CD8-positive, alpha-beta T cell (primary cell): ENCODE measurements at regions of chr1 and their contacts with region 1.

Region 1: GRCh38 chr1:179081687-179082332 is at the start of gene TOR3A:
- DNase-seq: peak; percentile 43 to 87 (median 75)
- ATAC-seq: peak; percentile 47
- H3K4me3 ChIP-seq: peak within 1 kb of the TSS; percentile 62 to 78
- H3K4me3 Mint-ChIP-seq: peak within 1 kb of the TSS; percentile 98
- H3K27ac ChIP-seq: peak within 1 kb of the TSS; percentile 58 to 74
- H3K27ac Mint-ChIP-seq: peak within 1 kb of the TSS; percentile 97
- H3K4me1 ChIP-seq: peaks cover 20% of the 10 kb centered on the region
- H3K4me1 Mint-ChIP-seq: peaks cover 31% of the 10 kb centered on the region
- H3K27me3 ChIP-seq: no peaks in the 10 kb centered on the region
- H3K27me3 Mint-ChIP-seq: no peaks in the 10 kb centered on the region
- CTCF ChIP-seq: no peak
- total RNA-seq, gene TOR3A: 15.6 to 16.0 TPM

Region 2: DNA sequence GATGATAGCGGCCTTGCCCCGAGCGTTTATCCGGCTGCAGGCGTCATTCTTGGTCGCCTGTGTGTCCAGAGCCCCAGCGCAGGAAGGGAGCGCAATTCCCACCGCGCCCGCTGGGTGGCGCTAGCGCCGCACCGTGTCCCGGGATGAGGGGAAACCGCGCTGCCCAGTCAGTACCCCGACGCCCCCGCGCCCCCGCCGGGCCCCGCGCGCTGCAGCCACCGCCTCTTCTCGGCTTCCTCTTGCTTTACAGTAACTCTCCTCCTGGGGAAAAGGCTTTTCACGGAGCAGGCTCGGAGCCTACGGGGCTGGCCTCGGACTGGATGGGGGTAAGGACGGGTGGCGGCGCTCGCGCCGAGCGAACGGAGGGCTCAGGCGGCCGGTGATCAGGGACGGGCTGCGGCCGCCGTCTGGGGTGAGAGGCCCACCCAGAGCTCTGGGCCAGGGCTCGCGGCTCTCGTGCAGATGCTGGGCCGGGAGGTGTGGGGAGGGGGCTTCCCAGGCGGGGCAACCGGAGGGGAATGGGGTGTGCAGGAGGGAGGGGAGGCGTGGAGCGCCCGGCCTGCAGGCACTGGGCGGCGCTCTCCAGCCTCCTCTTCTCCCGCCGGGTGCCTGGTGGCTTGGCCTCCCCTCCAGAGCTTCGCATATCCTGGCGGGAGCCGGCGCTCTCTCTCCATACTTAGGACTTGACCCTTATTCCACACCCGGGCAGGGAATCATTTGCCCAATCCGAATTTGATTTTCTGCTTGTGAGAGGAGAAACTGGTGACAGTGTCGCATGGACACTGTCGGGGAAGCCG is 539.1 kb before region 1 on chr1:
- CTCF ChIA-PET with region 1: no interaction called
- POLR2A ChIA-PET with region 1: no interaction called
- intact Hi-C with region 1: loop called in 1 of 2 experiments (anchors 2 kb)
- DNase-seq: peak; percentile 68 to 96 (median 85)
- ATAC-seq: peak; percentile 92
- H3K4me3 ChIP-seq: peak overlapping the region; percentile 75 to 92
- H3K4me3 Mint-ChIP-seq: peak overlapping the region; percentile 90
- H3K27ac ChIP-seq: peak overlapping the region in 1 of 2 experiments; percentile 22
- H3K27ac Mint-ChIP-seq: peak overlapping the region; percentile 62
- H3K4me1 ChIP-seq: peaks cover 11% of the 10 kb centered on the region
- H3K4me1 Mint-ChIP-seq: peaks cover 9% of the 10 kb centered on the region
- H3K27me3 ChIP-seq: no peaks in the 10 kb centered on the region
- H3K27me3 Mint-ChIP-seq: no peaks in the 10 kb centered on the region
- CTCF ChIP-seq: peak; percentile 98

Region 3: DNA sequence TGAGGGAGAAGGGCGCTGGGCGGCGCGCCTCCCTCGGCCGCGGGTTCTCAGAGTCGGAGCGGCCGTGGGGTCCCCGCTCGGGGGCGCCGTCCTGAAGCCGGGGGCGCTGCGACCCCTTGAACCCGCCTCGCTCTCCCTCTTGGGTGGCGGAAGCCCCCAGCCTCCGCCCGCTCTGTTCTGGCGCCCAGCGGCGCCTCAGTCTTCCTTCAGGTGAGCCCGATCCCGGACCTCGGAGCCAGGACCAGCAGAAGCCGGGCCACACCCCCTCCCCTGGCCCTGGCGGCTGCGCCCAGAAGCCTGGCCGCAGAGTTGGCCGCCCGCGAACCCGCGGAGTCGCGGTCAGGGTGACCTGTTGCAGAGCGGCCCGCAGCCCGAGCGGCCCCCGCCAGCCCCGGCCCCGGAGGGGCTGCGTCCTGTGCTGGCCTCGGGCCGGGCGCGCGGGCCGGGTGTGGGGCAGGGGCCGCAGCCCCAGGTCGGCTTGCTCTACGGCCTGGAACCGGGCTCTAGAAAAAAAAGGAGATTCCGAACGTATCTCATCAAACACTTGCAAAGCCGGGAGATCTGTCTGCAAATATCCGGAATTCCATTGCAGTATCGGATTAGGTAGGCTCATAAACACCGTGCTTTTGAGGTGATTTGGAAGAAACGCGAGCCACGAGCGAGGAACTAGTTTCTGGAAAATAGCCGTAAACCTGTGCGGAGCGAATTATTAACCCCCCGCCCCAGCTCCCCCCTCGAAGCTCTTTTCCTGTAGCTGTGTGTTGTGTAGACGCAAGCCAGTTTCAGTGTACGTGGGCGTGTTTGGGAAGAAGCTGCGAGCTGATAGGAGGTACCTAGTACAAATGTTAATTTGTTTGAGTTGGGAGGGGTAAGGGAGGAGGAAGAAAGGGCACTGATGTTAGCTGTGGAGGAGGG is 355.9 kb before region 1 on chr1:
- CTCF ChIA-PET with region 1: no interaction called
- POLR2A ChIA-PET with region 1: no interaction called
- intact Hi-C with region 1: loop called in 1 of 2 experiments (anchors 5 kb)
- DNase-seq: peak in 8 of 9 experiments; percentile 31 to 85 (median 62)
- ATAC-seq: peak; percentile 81
- H3K4me3 ChIP-seq: peak overlapping the region; percentile 67 to 90
- H3K4me3 Mint-ChIP-seq: peak overlapping the region; percentile 85
- H3K27ac ChIP-seq: peak overlapping the region; percentile 58 to 69
- H3K27ac Mint-ChIP-seq: peak overlapping the region; percentile 75
- H3K4me1 ChIP-seq: peaks cover 10% of the 10 kb centered on the region
- H3K4me1 Mint-ChIP-seq: peaks cover 23% of the 10 kb centered on the region
- H3K27me3 ChIP-seq: no peaks in the 10 kb centered on the region
- H3K27me3 Mint-ChIP-seq: peaks cover 3% of the 10 kb centered on the region
- CTCF ChIP-seq: no peak

Region 4: DNA sequence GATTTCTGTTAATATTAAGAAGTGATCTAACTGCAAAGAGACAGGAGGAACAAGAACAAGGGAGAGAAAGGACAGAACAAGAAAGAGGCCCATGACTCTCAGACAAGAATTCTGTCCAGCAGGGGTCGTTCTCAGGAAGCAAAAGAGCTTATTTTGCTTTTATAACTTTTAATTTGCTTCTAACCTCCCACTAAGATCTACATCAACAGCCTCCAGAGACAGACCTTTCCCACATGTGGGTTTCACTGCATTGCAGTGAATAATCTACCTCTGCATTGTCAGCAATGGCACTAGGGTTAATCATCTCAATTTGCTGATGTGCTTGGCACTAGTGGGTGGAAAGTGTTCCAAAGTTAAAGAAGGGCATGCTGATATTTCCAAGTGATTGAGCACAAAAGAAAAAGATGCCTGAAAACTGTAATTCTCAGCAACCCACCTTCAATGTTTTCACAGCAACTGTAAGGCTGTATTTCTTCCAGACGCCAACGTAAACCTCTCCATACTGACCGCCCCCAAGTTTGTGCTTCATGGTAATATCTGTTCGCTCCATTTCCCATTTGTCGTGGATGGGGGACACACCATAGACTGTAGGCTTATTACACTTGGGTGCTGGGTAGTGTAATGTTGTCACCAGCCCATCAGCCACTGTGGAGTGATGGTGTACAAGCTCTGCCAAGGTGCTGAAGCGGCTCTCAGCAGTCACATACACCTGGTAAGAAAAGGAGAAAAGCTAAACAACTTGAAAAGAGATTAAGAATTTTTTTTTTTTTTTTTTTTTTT is 39.5 kb after region 1 on chr1:
- CTCF ChIA-PET with region 1: interaction called, 6 read pairs
- POLR2A ChIA-PET with region 1: no interaction called
- intact Hi-C with region 1: loop called (anchors 1 to 2 kb)
- DNase-seq: peak in 7 of 9 experiments; percentile 6 to 63 (median 50)
- ATAC-seq: peak; percentile 44
- H3K4me3 ChIP-seq: no peak overlapping the region
- H3K4me3 Mint-ChIP-seq: no peak overlapping the region
- H3K27ac ChIP-seq: no peak overlapping the region
- H3K27ac Mint-ChIP-seq: no peak overlapping the region
- H3K4me1 ChIP-seq: no peaks in the 10 kb centered on the region
- H3K4me1 Mint-ChIP-seq: no peaks in the 10 kb centered on the region
- H3K27me3 ChIP-seq: no peaks in the 10 kb centered on the region
- H3K27me3 Mint-ChIP-seq: no peaks in the 10 kb centered on the region
- CTCF ChIP-seq: peak; percentile 55

Region 5: GRCh38 chr1:179190861-179191260 is 109.1 kb after region 1 on chr1:
- CTCF ChIA-PET with region 1: no interaction called
- POLR2A ChIA-PET with region 1: no interaction called
- intact Hi-C with region 1: loop called in 1 of 2 experiments (anchors 5 kb)
- DNase-seq: peak in 1 of 9 experiments; percentile 9
- ATAC-seq: no peak
- H3K4me3 ChIP-seq: no peak overlapping the region
- H3K4me3 Mint-ChIP-seq: no peak overlapping the region
- H3K27ac ChIP-seq: no peak overlapping the region
- H3K27ac Mint-ChIP-seq: no peak overlapping the region
- H3K4me1 ChIP-seq: no peaks in the 10 kb centered on the region
- H3K4me1 Mint-ChIP-seq: peaks cover 20% of the 10 kb centered on the region
- H3K27me3 ChIP-seq: no peaks in the 10 kb centered on the region
- H3K27me3 Mint-ChIP-seq: no peaks in the 10 kb centered on the region
- CTCF ChIP-seq: no peak

Region 6: DNA sequence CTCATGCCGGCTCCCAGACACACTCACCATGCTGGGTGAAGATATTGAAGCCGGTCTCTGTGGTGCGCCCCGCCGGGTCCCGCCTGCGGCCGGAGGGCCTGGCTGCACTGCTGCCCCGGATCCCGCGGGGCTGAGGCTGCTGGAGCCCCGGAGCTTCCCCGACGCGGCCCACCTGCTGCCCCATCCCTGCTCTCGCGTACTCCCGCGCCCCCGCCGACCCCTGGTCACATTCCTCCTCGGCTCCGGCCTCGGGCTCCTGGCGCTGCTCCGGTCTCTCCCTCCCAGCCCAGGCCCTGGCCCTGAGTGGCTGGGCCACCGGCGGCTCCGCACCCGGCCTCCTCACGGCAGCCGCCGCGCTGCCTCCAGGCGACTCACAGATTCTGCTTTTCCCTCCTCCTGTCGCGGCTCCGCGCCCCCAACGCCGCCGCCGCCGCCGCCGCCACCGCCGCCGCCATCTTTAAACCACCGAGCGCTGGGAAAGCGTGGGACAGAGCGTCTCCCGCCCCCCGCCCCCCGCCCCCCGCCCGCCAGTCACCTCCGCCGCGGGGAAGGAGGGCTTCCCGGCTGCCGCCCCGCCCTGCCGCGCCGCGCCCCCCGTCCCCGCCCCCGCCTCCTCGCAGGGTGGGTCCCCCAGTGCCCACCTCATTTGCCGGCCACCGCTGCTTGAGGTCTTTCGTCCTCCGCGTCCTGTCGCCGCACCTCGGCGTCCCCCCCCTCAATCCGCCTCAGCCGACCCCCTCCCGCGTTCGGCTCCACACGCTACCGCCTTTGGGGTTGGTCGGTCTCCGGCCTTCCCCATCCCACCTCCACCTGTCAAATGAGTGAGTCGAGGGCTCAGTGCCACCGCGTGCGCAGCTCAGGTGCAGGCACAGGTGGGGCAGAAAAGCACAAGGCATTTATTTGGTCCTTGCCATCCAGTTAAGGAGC is 147.7 kb after region 1 on chr1 and contains the start of gene ABL2:
- CTCF ChIA-PET with region 1: no interaction called
- POLR2A ChIA-PET with region 1: no interaction called
- intact Hi-C with region 1: loop called (anchors 2 to 5 kb)
- DNase-seq: peak; percentile 1 to 74 (median 59)
- ATAC-seq: peak; percentile 63
- H3K4me3 ChIP-seq: peak within 1 kb of the TSS; percentile 67
- H3K4me3 Mint-ChIP-seq: peak within 1 kb of the TSS; percentile 90
- H3K27ac ChIP-seq: peak within 1 kb of the TSS; percentile 51 to 53
- H3K27ac Mint-ChIP-seq: peak within 1 kb of the TSS; percentile 91
- H3K4me1 ChIP-seq: peaks cover 14% of the 10 kb centered on the region
- H3K4me1 Mint-ChIP-seq: peaks cover 32% of the 10 kb centered on the region
- H3K27me3 ChIP-seq: no peaks in the 10 kb centered on the region
- H3K27me3 Mint-ChIP-seq: no peaks in the 10 kb centered on the region
- CTCF ChIP-seq: no peak
- total RNA-seq, gene ABL2: 12.4 to 14.6 TPM

Region 7: DNA sequence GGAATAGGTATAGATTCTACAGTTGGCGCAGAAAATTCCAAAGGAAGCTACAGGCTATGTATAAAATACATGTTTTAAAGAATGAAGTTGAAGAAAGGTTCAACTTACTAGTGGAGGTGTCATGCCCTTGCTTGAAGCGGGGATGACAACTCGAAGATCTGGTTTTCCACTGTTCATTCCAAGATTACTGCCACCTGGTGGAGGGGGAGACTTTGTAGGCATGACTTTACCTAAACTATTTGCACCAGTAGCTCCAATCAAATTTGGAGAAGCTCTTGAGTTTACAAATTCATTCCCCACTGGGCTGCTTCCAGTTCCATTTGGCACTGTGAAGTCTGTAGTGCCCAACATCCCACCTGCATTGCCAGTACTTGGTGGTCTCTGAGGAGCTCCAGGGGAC is 365.7 kb after region 1 on chr1:
- CTCF ChIA-PET with region 1: no interaction called
- POLR2A ChIA-PET with region 1: no interaction called
- intact Hi-C with region 1: loop called in 1 of 2 experiments (anchors 5 kb)
- DNase-seq: peak in 1 of 9 experiments; percentile 8
- ATAC-seq: no peak
- H3K4me3 ChIP-seq: no peak overlapping the region
- H3K4me3 Mint-ChIP-seq: no peak overlapping the region
- H3K27ac ChIP-seq: no peak overlapping the region
- H3K27ac Mint-ChIP-seq: no peak overlapping the region
- H3K4me1 ChIP-seq: no peaks in the 10 kb centered on the region
- H3K4me1 Mint-ChIP-seq: no peaks in the 10 kb centered on the region
- H3K27me3 ChIP-seq: no peaks in the 10 kb centered on the region
- H3K27me3 Mint-ChIP-seq: peaks cover 13% of the 10 kb centered on the region
- CTCF ChIP-seq: no peak